Body of pancreas (tissue), 4 donors: ENCODE measurements at regions of chr3 and their contacts with region 1.

Region 1: GRCh38 chr3:71734883-71735282 is 9.7 kb upstream of the EIF4E3 start:
- DNase-seq: no peak
- ATAC-seq: no peak
- H3K4me3 ChIP-seq: no peak overlapping the region
- H3K27ac ChIP-seq: no peak overlapping the region
- H3K4me1 ChIP-seq: peaks cover 3% of the 10 kb centered on the region
- H3K27me3 ChIP-seq: no peaks in the 10 kb centered on the region
- CTCF ChIP-seq: no peak
- POLR2A ChIP-seq: no peak

Region 2: GRCh38 chr3:71862371-71863140 is 127.7 kb after region 1 on chr3:
- intact Hi-C with region 1: loop called (anchors 10 kb)
- DNase-seq: no peak
- ATAC-seq: no peak
- H3K4me3 ChIP-seq: no peak overlapping the region
- H3K27ac ChIP-seq: peak overlapping the region in 1 of 4 donors; percentile 38
- H3K4me1 ChIP-seq: peaks cover 6% of the 10 kb centered on the region
- H3K27me3 ChIP-seq: no peaks in the 10 kb centered on the region
- CTCF ChIP-seq: no peak
- POLR2A ChIP-seq: no peak